Left ventricle myocardium superior (tissue), 1 donor: ENCODE measurements at regions of chr3 and their contacts with region 1.

Region 1: DNA sequence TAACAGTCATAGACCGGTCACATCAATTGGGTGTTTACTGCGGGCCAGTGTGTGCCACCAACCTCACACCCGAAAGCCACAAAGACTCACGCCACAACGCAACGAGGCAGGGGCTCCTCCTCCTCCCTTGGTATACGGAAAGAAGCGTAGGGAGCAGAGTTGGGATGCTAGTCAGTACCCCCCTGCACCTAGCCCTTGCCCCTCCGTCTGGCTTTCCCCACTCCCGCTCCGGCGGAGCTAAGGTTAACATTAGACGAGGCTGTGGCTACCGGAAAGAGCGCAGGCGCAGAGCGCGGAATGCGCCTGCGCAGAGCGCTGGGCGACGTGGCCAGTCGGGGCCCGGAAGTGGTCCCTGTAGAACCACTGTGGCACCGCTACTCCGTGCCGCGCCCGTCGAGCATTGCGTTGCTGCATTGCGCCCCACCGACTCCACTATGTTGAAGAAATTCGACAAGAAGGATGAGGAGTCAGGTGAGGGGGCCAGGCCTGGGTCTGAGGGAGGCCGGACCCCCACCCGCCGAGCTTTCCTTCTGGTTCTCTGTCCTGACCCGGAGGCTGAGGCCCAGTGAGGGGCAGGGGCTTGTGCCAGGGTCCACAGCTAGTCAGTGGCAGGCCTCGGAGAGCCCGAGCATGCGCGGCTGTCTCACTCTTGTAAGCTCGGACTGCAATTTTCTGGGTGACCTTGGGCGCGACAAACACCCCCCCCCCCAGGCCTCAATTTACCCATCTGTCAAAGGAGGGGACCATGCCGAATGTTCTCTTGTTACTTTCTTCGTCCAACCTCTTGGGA is at the start of gene COPG1:
- DNase-seq: peak; percentile 94
- ATAC-seq: peak; percentile 93
- total RNA-seq, gene COPG1: 84.1 TPM

Region 2: DNA sequence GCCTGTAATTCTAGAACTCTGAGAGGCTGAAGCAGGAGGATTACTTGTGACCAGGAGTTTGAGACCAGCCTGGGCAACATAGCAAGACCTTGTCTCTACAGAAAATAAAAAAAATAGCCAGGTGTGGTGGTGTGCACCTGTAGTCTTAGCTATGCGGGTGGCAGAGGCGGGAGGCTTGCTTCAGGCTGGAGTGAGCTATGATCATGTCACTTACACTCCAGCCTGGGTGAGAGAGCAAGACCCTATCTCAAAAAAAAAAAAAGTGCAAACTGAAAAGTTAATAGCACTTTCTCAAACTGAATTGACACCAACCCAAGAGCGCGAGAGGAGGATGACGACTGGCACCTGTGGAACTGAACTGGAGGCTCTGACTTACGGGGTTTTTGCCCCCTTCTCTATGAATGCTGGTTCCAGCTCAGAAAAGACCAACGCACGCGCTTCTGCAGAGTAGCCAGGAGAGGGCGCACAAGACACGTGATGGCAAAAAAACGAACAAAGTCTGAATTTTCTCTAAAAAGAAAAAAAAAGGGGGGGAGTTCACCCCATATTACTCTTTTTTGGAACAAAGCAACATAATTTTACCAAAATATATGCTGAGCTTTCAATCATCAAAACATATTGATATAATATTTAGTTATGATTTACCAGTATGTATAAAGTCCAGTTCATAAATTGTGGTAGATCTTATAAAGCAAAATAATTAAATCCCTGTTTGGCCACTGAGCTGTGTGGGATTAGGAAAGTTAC is 279.3 kb before region 1 on chr3:
- intact Hi-C with region 1: loop called (anchors 10 kb)
- DNase-seq: peak; percentile 52
- ATAC-seq: peak; percentile 50